ENCODE measurements at regions of chr7 and their contacts with region 1.

Region 1: GRCh38 chr7:50502001-50502684 is 52.0 kb upstream of the FIGNL1 start:
- DNase-seq: peak; percentile 95
- H3K4me3 Mint-ChIP-seq: peak overlapping the region; percentile 58
- H3K27ac Mint-ChIP-seq: peak overlapping the region; percentile 82
- H3K4me1 Mint-ChIP-seq: peaks cover 71% of the 10 kb centered on the region
- H3K27me3 Mint-ChIP-seq: no peaks in the 10 kb centered on the region
- CTCF ChIP-seq: no peak

Region 2: GRCh38 chr7:49927631-49928030 is 574.5 kb before region 1 on chr7:
- CTCF ChIA-PET with region 1: no interaction called
- POLR2A ChIA-PET with region 1: no interaction called
- intact Hi-C with region 1: no loop called
- DNase-seq: no peak
- H3K4me3 Mint-ChIP-seq: no peak overlapping the region
- H3K27ac Mint-ChIP-seq: no peak overlapping the region
- H3K4me1 Mint-ChIP-seq: no peaks in the 10 kb centered on the region
- H3K27me3 Mint-ChIP-seq: peaks cover 14% of the 10 kb centered on the region
- CTCF ChIP-seq: no peak

Region 3: DNA sequence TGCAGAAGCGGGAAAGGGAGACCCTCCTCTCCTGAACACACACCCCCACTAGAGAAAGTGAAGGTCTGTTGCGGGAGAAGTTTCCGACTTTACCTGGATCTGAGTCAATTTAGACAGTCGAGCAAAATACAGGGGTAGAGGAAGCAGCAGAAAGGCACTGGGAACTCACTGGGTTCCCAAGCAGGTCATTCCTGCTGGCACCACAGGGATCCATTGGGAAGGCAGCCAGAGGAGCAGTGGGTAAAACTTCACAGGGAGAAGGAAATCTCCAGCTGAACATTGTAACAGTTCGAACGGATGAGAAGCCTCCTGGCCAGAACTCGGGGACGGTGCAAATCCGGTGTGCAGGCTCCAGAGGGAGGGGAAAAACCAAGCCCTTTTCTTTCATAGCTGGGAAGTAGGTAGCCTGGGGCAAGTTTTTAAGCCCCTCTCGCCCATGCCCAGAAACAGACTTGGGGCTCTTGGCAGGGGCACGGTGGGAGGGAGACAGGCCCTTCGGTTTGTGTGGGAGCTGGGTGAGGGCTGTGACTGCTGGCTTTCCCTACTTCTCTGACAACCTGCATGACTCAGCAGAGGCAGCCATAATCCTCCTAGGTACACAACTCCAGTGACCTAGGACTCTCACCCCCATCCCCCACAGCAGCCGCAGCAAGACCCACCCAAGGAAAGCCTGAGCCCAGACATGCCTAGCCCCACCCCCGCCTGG is 11.2 kb after region 1 on chr7:
- CTCF ChIA-PET with region 1: interaction called, 9 read pairs
- POLR2A ChIA-PET with region 1: interaction called, 29 read pairs
- intact Hi-C with region 1: no loop called
- DNase-seq: peak; percentile 71
- H3K4me3 Mint-ChIP-seq: peak overlapping the region; percentile 5
- H3K27ac Mint-ChIP-seq: peak overlapping the region; percentile 93
- H3K4me1 Mint-ChIP-seq: peaks cover 17% of the 10 kb centered on the region
- H3K27me3 Mint-ChIP-seq: no peaks in the 10 kb centered on the region
- CTCF ChIP-seq: no peak

Region 4: DNA sequence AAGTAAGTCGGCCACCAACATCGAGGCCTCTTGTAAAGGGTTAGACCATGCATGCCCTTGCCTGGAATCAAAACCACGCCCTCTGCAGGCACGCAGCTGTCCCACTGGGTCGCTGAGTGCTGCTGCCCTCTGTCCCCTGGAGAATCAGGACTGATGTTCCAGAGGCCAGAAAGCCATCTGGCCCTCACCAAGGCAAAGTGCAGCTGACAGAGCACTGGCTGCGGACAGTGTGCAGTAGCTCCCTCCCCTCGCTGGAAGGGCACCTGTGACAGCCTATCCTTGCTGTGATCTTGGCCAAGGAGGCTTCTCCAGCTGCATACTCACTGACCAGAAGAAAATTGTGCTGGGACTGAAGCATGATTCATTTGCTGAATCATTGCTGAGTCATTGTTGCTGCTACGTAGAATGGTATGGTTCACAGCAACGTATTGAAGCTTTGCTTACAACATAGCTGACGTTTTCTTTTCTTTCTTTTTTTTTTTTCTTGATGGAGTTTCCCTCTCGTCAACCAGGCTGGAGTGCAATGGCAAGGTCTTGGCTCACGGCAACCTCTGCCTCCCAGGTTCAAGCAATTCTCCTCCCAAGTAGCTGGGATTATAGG is 32.6 kb after region 1 on chr7:
- CTCF ChIA-PET with region 1: interaction called, 13 read pairs
- POLR2A ChIA-PET with region 1: interaction called, 31 read pairs
- intact Hi-C with region 1: loop called (anchors 5 kb)
- DNase-seq: peak; percentile 96
- H3K4me3 Mint-ChIP-seq: peak overlapping the region; percentile 44
- H3K27ac Mint-ChIP-seq: peak overlapping the region; percentile 98
- H3K4me1 Mint-ChIP-seq: peaks cover 29% of the 10 kb centered on the region
- H3K27me3 Mint-ChIP-seq: no peaks in the 10 kb centered on the region
- CTCF ChIP-seq: no peak

Region 5: DNA sequence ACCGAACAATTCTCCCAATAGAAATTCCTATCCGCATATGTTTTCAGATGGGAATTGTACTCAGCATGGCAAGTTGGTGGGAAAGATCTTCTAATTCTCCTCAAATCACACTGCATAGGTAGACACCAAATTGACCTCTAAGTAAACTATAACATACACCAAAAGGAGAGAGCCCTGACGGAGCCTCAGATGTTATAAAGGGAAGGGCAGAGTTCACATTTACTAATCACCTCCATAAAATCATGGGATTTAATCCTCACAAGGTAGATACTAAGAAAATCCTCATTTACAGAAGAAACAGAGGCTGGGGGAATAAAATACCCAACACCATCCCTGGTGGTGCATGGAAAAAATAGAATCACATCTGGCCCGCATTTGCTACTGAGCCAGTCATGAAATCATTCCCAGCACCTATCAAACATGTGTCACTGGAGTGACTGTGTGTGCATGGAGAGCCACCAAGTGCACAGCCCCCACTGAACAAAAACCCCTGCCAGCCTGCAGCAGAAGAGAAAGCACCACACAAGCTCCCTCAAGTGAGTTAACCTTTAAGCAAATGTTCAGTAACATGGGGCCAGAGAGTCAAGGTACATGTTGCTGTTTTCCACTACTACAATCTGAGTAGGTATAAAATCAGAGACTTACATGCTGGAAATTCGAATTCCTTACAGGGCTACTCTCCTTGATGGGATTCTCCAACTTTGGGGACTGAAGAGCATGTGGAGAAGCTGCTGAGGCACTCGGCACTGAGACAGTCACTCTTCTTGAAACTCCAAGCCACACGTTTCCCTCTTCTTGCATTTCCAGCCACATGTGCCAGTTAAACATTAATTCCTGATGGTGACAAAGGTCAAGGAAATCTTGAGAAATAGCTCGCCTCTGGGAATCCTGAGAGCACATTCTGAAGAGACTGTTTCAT is 62.8 kb after region 1 on chr7 and contains the start of gene DDC:
- CTCF ChIA-PET with region 1: no interaction called
- POLR2A ChIA-PET with region 1: no interaction called
- intact Hi-C with region 1: no loop called
- DNase-seq: no peak
- H3K4me3 Mint-ChIP-seq: no peak within 1 kb of the TSS
- H3K27ac Mint-ChIP-seq: no peak within 1 kb of the TSS
- H3K4me1 Mint-ChIP-seq: no peaks in the 10 kb centered on the region
- H3K27me3 Mint-ChIP-seq: peaks cover 22% of the 10 kb centered on the region
- CTCF ChIP-seq: no peak
- total RNA-seq, gene DDC: 0.64 and 0.79 TPM in 2 replicates